ENCODE measurements at regions of chr20 and their contacts with region 1.

Region 1: GRCh38 chr20:49982346-49983122 is at the start of gene SNAI1:
- DNase-seq: peak; percentile 68
- H3K4me3 ChIP-seq: peak within 1 kb of the TSS in 1 of 3 experiments; percentile 32
- H3K27ac ChIP-seq: no peak within 1 kb of the TSS
- H3K4me1 ChIP-seq: peaks cover 15% of the 10 kb centered on the region
- H3K27me3 ChIP-seq: peaks cover 2% of the 10 kb centered on the region
- CTCF ChIP-seq: peak in 1 of 2 donors; percentile 26
- total RNA-seq, gene SNAI1: not detected

Region 2: GRCh38 chr20:49877386-49877921 is 105.1 kb before region 1 on chr20:
- CTCF ChIA-PET with region 1: no interaction called
- dilution Hi-C with region 1: no loop called
- in situ Hi-C with region 1: no loop called
- intact Hi-C with region 1: no loop called
- DNase-seq: no peak
- H3K4me3 ChIP-seq: no peak overlapping the region
- H3K27ac ChIP-seq: no peak overlapping the region
- H3K4me1 ChIP-seq: no peaks in the 10 kb centered on the region
- H3K27me3 ChIP-seq: no peaks in the 10 kb centered on the region
- CTCF ChIP-seq: no peak

Region 3: DNA sequence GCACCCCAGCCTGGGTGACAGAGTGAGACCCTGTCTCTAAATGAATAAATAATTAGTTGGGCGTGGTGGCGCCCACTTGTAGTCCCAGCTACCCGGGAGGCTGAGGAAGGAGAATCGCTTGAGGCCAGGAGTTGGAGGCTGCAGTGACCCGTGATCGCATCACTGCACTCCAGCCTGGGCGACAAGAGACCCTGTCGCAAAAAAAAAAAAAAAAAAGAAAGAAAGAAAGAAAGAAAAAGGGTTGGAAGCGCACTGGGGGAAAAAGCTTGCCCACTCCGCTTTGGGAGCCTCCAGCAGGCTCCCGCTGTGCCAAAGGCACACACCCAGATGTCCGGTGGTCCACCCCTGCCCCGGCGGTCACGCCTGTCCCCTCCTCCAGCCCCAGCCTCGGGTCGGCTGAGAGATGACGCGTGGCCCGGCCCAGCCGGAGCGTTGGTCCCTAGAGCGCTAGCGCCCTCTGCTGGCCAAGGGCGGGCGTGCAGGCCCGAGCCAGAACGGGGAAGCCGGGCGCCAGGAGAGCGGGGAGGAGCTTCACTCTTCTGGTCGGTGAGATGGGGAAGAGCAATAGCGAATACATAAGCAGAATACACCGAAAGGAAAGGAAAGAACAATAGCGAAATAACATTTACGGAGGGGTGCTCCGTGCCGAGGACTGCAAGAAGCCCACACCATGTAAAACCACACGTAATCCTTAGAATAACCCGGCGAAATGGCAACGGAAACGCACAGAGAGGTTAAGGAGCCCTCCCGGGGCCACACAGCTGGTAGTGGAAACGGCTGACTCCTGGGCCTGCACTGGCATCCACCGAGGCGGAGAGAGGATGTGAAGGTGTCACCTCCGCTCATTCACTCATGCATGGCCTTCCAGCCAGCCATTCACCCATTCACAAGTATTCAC is 88.7 kb after region 1 on chr20:
- CTCF ChIA-PET with region 1: interaction called, 23 read pairs
- dilution Hi-C with region 1: loop called (anchors 10 kb)
- in situ Hi-C with region 1: loop called (anchors 5 kb)
- intact Hi-C with region 1: loop called (anchors 1 kb)
- DNase-seq: peak; percentile 68
- H3K4me3 ChIP-seq: peak overlapping the region; percentile 23 to 46 (median 42)
- H3K27ac ChIP-seq: no peak overlapping the region
- H3K4me1 ChIP-seq: no peaks in the 10 kb centered on the region
- H3K27me3 ChIP-seq: no peaks in the 10 kb centered on the region
- CTCF ChIP-seq: peak; percentile 95 to 98

Region 4: GRCh38 chr20:50099565-50099991 is 117.0 kb after region 1 on chr20:
- CTCF ChIA-PET with region 1: interaction called, 17 read pairs
- dilution Hi-C with region 1: no loop called
- in situ Hi-C with region 1: no loop called
- intact Hi-C with region 1: no loop called
- DNase-seq: no peak
- H3K4me3 ChIP-seq: no peak overlapping the region
- H3K27ac ChIP-seq: no peak overlapping the region
- H3K4me1 ChIP-seq: peaks cover 13% of the 10 kb centered on the region
- H3K27me3 ChIP-seq: no peaks in the 10 kb centered on the region
- CTCF ChIP-seq: no peak

Region 5: GRCh38 chr20:50115591-50116372 is 133.2 kb after region 1 on chr20:
- CTCF ChIA-PET with region 1: interaction called, 14 read pairs
- dilution Hi-C with region 1: no loop called
- in situ Hi-C with region 1: no loop called
- intact Hi-C with region 1: no loop called
- DNase-seq: peak; percentile 91
- H3K4me3 ChIP-seq: peak overlapping the region; percentile 46 to 63 (median 60)
- H3K27ac ChIP-seq: peak overlapping the region; percentile 57
- H3K4me1 ChIP-seq: peaks cover 26% of the 10 kb centered on the region
- H3K27me3 ChIP-seq: no peaks in the 10 kb centered on the region
- CTCF ChIP-seq: no peak

Region 6: DNA sequence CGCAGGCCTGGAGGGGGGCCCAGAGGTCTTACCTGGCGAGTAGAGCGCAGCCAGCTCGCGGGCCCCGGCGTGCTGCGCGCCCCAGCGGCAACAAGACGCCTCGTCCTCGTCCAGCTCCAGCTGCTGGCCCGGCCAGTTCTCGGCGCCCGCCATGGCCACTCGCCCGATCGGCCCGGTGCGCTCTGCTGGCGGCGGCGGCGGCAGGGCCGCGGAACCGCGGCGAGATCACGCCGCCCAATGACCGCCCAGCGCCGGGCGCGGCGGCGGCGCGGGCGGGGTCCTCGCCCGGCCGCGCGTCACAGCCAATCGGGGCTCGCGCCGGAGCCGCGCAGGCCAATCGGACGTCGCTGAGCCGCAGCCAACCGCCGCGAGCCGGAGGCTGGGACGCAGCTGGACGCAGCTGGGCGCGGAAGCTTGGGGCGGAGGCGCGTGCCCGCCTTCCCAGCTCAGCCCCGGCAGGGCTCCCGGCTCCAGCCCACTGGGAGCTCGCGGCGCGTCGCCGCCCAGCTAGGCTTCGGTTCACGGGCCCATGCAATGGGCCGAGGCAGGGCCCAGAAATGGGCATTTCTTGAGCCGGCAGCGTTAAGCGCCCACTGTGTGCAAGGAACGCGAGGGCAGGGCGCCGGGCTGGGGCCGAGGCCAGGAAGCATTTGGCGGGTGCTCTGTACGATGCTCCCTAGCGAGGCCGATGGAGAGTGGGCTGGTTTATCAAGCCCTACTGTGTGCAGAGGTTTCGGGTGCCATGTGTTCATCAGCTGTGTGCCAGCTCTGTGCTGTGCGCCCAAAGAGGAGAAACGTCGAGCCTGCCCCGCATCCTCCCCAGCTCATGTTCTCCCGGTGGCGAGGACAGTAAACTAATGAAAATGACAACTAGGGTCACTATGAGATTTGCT is 171.2 kb after region 1 on chr20 and contains the start of gene PEDS1:
- CTCF ChIA-PET with region 1: interaction called, 9 read pairs
- dilution Hi-C with region 1: no loop called
- in situ Hi-C with region 1: loop called in 1 of 2 experiments (anchors 10 kb)
- intact Hi-C with region 1: loop called (anchors 1 kb)
- DNase-seq: peak; percentile 91
- H3K4me3 ChIP-seq: peak within 1 kb of the TSS; percentile 80 to 94 (median 90)
- H3K27ac ChIP-seq: peak within 1 kb of the TSS; percentile 89
- H3K4me1 ChIP-seq: peaks cover 39% of the 10 kb centered on the region
- H3K27me3 ChIP-seq: no peaks in the 10 kb centered on the region
- CTCF ChIP-seq: no peak
- total RNA-seq, gene PEDS1: 28.8 to 29.5 TPM

Region 7: GRCh38 chr20:50179507-50180016 is 197.0 kb after region 1 on chr20:
- CTCF ChIA-PET with region 1: interaction called, 3 read pairs
- dilution Hi-C with region 1: no loop called
- in situ Hi-C with region 1: no loop called
- intact Hi-C with region 1: loop called (anchors 1 kb)
- DNase-seq: no peak
- H3K4me3 ChIP-seq: no peak overlapping the region
- H3K27ac ChIP-seq: no peak overlapping the region
- H3K4me1 ChIP-seq: no peaks in the 10 kb centered on the region
- H3K27me3 ChIP-seq: no peaks in the 10 kb centered on the region
- CTCF ChIP-seq: no peak

Region 8: DNA sequence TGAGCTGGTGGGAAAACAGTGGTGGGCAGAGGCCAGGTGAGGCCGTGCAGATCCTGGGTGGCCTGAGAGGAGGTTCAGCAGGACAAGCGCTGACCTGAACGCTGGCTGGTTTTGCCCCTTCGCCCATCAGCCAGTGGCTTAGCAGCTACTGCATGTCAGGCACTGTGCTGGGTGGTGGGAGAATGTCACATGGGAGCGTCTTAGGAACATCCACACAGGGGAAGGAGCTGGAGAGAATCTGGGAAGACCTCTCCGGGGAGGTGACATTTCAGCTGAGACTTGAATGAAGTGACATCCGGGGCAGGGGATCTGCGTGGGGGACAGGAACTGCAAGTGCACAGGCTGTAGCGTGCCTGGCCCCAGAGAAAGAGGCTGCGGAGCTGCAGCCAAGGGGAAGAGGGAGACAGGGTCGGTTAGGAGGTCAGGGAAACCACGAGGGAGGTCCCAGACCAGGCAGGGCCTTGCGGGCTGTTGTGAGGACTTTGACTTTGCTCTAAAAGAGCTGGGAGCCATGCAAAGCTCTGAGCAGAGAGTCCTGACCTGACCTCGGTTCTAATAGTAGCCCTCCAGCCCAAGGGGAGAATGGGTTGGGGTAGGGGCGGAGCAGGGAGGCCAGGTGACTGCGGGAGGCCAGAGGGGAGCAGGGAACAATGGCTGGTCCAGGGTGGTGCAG is 370.9 kb after region 1 on chr20:
- CTCF ChIA-PET with region 1: no interaction called
- dilution Hi-C with region 1: no loop called
- in situ Hi-C with region 1: no loop called
- intact Hi-C with region 1: no loop called
- DNase-seq: no peak
- H3K4me3 ChIP-seq: no peak overlapping the region
- H3K27ac ChIP-seq: no peak overlapping the region
- H3K4me1 ChIP-seq: peaks cover 4% of the 10 kb centered on the region
- H3K27me3 ChIP-seq: no peaks in the 10 kb centered on the region
- CTCF ChIP-seq: no peak

Measured in mammary epithelial cell (primary cell).